ENCODE measurements at regions of chr3 and their contacts with region 1.

Region 1: GRCh38 chr3:159763602-159764489 is 224.8 kb upstream of the IL12A start:
- DNase-seq: peak; percentile 86 to 90 (median 89)
- ATAC-seq: peak; percentile 51 to 86 (median 72)
- H3K4me3 ChIP-seq: peak overlapping the region; percentile 57 to 96 (median 84)
- H3K27ac ChIP-seq: peak overlapping the region; percentile 91 to 100 (median 98)
- H3K4me1 ChIP-seq: peaks cover 0 to 65% (median 36%) of the 10 kb centered on the region in 12 donors
- H3K27me3 ChIP-seq: peaks cover 0 to 16% (median 0%) of the 10 kb centered on the region in 9 donors
- CTCF ChIP-seq: peak in 9 of 12 donors; percentile 8 to 50 (median 33)
- POLR2A ChIP-seq: peak in 1 of 2 donors; percentile 50

Region 2: DNA sequence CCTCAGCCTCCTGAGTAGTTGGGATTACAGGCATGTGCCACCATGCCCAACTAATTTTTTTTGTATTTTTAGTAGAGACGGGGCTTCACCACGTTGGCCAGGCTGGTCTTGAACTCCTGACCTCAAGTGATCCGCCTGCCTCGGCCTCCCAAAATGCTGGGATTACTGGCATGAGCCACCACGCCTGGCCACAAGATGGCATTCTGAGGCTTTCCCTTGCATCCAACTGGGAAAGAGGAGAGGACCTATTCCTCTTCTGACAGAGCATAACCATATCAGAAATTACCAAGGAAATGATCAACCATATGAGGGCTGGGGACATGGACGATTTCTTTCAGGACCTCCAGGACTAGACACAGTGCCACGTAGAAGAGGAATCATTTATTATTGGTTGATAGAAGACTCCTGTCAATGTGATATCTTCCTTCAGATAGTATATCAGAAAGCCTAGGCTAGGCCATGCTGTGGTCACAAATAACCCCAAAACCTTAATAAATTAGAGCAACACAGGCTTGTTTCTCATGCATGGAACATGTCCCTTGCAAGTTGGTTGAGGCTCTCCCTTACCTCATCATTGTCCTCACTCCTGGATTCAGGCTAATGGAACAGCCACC is 147.5 kb before region 1 on chr3:
- intact Hi-C with region 1: loop called in 3 of 10 experiments (anchors 5 to 10 kb)
- DNase-seq: peak; percentile 32 to 67 (median 47)
- ATAC-seq: peak; percentile 68 to 81 (median 76)
- H3K4me3 ChIP-seq: no peak overlapping the region
- H3K27ac ChIP-seq: no peak overlapping the region
- H3K4me1 ChIP-seq: peaks cover 0 to 11% (median 3%) of the 10 kb centered on the region in 12 donors
- H3K27me3 ChIP-seq: no peaks in the 10 kb centered on the region
- CTCF ChIP-seq: peak; percentile 33 to 76 (median 65)
- POLR2A ChIP-seq: no peak

Region 3: GRCh38 chr3:159672728-159673688 is 90.8 kb before region 1 on chr3:
- intact Hi-C with region 1: loop called in 2 of 10 experiments (anchors 5 to 10 kb)
- DNase-seq: no peak
- ATAC-seq: no peak
- H3K4me3 ChIP-seq: no peak overlapping the region
- H3K27ac ChIP-seq: no peak overlapping the region
- H3K4me1 ChIP-seq: peaks cover 0 to 20% (median 7%) of the 10 kb centered on the region in 12 donors
- H3K27me3 ChIP-seq: no peaks in the 10 kb centered on the region
- CTCF ChIP-seq: peak in 2 of 12 donors; percentile 14 to 16
- POLR2A ChIP-seq: no peak

Region 4: GRCh38 chr3:159796744-159797143 is 32.9 kb after region 1 on chr3:
- intact Hi-C with region 1: loop called in 7 of 10 experiments (anchors 2 to 5 kb)
- DNase-seq: no peak
- ATAC-seq: peak in 3 of 4 donors; percentile 31 to 64 (median 63)
- H3K4me3 ChIP-seq: no peak overlapping the region
- H3K27ac ChIP-seq: peak overlapping the region in 10 of 12 donors; percentile 18 to 87 (median 68)
- H3K4me1 ChIP-seq: peaks cover 5 to 90% (median 52%) of the 10 kb centered on the region in 12 donors
- H3K27me3 ChIP-seq: no peaks in the 10 kb centered on the region
- CTCF ChIP-seq: no peak
- POLR2A ChIP-seq: no peak

Region 5: GRCh38 chr3:159884661-159885402 is 121.0 kb after region 1 on chr3:
- intact Hi-C with region 1: loop called in 1 of 10 experiments (anchors 10 kb)
- DNase-seq: no peak
- ATAC-seq: no peak
- H3K4me3 ChIP-seq: no peak overlapping the region
- H3K27ac ChIP-seq: peak overlapping the region in 6 of 12 donors; percentile 11 to 44 (median 34)
- H3K4me1 ChIP-seq: peaks cover 7 to 84% (median 62%) of the 10 kb centered on the region in 12 donors
- H3K27me3 ChIP-seq: no peaks in the 10 kb centered on the region
- CTCF ChIP-seq: peak; percentile 42 to 73 (median 62)
- POLR2A ChIP-seq: no peak

Region 6: GRCh38 chr3:159929435-159930141 is 165.7 kb after region 1 on chr3:
- intact Hi-C with region 1: no loop called
- DNase-seq: peak in 3 of 5 donors; percentile 32 to 57 (median 49)
- ATAC-seq: peak; percentile 56 to 94 (median 78)
- H3K4me3 ChIP-seq: no peak overlapping the region
- H3K27ac ChIP-seq: peak overlapping the region; percentile 27 to 84 (median 52)
- H3K4me1 ChIP-seq: peaks cover 0 to 26% (median 9%) of the 10 kb centered on the region in 12 donors
- H3K27me3 ChIP-seq: no peaks in the 10 kb centered on the region
- CTCF ChIP-seq: peak in 11 of 12 donors; percentile 18 to 49 (median 30)
- POLR2A ChIP-seq: no peak

Region 7: DNA sequence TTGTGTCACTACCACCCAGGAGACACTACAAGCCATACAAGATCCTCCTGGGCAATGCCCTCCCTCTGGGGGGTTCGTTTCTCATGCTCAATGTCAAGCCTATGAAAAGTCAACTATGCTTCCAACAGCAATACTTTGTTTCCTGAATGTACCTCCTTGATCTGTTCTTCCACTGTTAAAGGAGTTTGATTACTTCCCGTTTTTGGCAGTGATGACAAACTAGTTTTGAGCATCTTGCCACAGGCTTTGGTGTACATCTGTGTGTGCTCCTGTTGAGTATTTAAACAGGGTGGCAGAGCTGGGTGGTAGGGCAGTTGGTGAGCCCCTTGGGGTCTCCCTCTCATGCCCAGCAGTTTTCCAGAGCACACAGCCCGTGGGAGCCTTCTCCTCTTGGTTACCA is 306.1 kb after region 1 on chr3:
- intact Hi-C with region 1: no loop called
- DNase-seq: no peak
- ATAC-seq: no peak
- H3K4me3 ChIP-seq: no peak overlapping the region
- H3K27ac ChIP-seq: no peak overlapping the region
- H3K4me1 ChIP-seq: no peaks in the 10 kb centered on the region
- H3K27me3 ChIP-seq: peaks cover 0 to 10% (median 0%) of the 10 kb centered on the region in 9 donors
- CTCF ChIP-seq: no peak
- POLR2A ChIP-seq: no peak